ENCODE measurements at regions of chr17 and their contacts with region 1.

Region 1: GRCh38 chr17:63773381-63774140 is at the start of gene CCDC47:
- DNase-seq: peak; percentile 99
- H3K4me3 Mint-ChIP-seq: peak within 1 kb of the TSS; percentile 96
- H3K27ac Mint-ChIP-seq: peak within 1 kb of the TSS; percentile 99
- H3K4me1 Mint-ChIP-seq: peaks cover 54% of the 10 kb centered on the region
- H3K27me3 Mint-ChIP-seq: no peaks in the 10 kb centered on the region
- total RNA-seq, gene CCDC47: 56.7 to 57.9 TPM

Region 2: GRCh38 chr17:63707151-63707550 is 66.4 kb before region 1 on chr17:
- CTCF ChIA-PET with region 1: interaction called, 5 read pairs
- POLR2A ChIA-PET with region 1: interaction called, 178 read pairs
- DNase-seq: no peak
- H3K4me3 Mint-ChIP-seq: peak overlapping the region; percentile 13
- H3K27ac Mint-ChIP-seq: peak overlapping the region; percentile 69
- H3K4me1 Mint-ChIP-seq: peaks cover 73% of the 10 kb centered on the region
- H3K27me3 Mint-ChIP-seq: no peaks in the 10 kb centered on the region

Region 3: GRCh38 chr17:63751806-63752205 is 21.8 kb before region 1 on chr17:
- CTCF ChIA-PET with region 1: interaction called, 6 read pairs
- POLR2A ChIA-PET with region 1: interaction called, 36 read pairs
- DNase-seq: peak; percentile 33
- H3K4me3 Mint-ChIP-seq: peak overlapping the region; percentile 33
- H3K27ac Mint-ChIP-seq: peak overlapping the region; percentile 75
- H3K4me1 Mint-ChIP-seq: peaks cover 19% of the 10 kb centered on the region
- H3K27me3 Mint-ChIP-seq: no peaks in the 10 kb centered on the region

Region 4: DNA sequence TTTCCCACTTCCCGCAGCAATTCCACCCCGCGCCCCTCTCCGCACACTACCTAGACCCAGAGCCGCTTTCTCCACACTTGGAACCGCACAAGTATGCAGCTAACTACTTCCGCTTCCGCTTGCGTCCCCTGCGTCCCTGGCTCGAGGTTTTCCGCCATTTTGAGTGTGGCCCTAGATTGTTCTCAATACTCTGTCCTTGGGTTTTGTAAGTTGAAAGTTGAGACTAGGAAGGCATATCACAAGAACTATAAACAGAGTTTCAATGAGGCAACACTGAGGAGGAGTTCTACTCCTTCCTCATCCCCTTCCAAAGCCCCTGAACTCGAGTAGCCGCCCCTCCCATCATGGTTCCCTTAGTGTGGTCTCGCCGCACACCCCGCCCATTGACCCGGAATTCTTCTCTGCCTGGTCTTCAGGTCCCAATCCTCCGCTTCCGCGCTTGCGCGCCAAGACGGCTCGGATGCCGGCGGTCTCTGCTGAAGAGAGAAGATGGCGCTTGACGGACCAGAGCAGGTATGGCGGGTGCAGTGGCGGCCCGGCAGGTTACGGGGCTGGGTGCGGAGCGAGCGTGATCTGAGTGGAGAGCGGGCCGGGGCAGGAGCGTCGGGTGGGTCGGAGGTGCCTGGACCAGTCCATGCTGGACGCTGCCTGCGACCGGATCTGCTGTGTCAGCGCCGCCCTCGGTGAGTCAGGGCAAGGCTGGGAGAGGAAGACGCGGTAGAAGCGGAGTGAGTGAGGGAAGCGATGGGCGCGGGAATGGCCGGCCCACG is 53.6 kb after region 1 on chr17 and contains the starts of genes FTSJ3 and PSMC5:
- CTCF ChIA-PET with region 1: interaction called, 13 read pairs
- POLR2A ChIA-PET with region 1: interaction called, 41 read pairs
- DNase-seq: peak; percentile 96
- H3K4me3 Mint-ChIP-seq: peak within 1 kb of the TSS; percentile 89
- H3K27ac Mint-ChIP-seq: peak within 1 kb of the TSS; percentile 93
- H3K4me1 Mint-ChIP-seq: peaks cover 82% of the 10 kb centered on the region
- H3K27me3 Mint-ChIP-seq: no peaks in the 10 kb centered on the region
- total RNA-seq, gene FTSJ3: 38.9 to 43.8 TPM
- total RNA-seq, gene PSMC5: 152 to 162 TPM

Region 5: DNA sequence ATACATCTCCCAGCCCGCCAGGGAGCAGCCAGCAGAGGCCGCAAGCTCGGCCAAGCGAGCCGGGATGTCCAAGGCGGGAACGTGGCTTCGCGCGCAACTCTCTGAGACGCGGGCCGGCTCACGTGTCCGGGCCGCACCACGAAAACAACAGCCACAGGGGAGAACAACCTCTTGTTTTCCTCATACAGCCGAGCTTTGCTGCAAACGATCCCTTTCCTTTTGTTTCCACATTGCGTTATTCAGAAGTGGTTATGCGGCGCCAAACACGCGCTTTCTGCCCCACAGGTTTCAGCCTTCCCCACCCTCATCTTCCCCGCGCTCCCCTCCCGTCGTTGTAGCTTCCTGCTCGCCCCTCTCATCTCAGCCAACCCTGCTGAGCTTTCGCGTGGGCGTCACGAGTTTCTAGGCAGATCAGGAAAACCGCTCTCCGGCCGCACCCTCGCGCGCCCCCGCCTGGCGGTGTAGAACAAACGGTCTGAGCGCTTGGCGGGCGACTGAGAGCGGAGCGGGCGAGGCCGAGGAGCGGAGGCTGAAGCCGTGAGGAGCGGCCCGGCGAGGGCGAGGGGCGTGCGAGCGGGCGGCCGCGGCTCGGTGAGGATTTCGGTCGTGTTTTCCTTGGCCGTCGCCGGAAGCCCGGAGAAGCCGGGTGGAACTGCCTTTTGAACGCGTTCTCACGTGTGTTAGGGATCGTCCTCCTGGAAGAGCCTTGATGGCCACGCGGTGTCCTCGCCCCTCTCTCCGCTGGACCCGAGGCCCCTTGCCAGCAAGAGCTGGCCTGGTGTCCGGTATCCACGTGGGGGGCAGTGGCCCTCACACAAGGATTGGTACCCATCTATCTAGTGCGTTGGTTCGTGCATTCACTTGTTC is 75.5 kb after region 1 on chr17:
- CTCF ChIA-PET with region 1: interaction called, 11 read pairs
- POLR2A ChIA-PET with region 1: interaction called, 20 read pairs
- DNase-seq: peak; percentile 96
- H3K4me3 Mint-ChIP-seq: peak overlapping the region; percentile 61
- H3K27ac Mint-ChIP-seq: peak overlapping the region; percentile 86
- H3K4me1 Mint-ChIP-seq: peaks cover 27% of the 10 kb centered on the region
- H3K27me3 Mint-ChIP-seq: peaks cover 15% of the 10 kb centered on the region

Region 6: DNA sequence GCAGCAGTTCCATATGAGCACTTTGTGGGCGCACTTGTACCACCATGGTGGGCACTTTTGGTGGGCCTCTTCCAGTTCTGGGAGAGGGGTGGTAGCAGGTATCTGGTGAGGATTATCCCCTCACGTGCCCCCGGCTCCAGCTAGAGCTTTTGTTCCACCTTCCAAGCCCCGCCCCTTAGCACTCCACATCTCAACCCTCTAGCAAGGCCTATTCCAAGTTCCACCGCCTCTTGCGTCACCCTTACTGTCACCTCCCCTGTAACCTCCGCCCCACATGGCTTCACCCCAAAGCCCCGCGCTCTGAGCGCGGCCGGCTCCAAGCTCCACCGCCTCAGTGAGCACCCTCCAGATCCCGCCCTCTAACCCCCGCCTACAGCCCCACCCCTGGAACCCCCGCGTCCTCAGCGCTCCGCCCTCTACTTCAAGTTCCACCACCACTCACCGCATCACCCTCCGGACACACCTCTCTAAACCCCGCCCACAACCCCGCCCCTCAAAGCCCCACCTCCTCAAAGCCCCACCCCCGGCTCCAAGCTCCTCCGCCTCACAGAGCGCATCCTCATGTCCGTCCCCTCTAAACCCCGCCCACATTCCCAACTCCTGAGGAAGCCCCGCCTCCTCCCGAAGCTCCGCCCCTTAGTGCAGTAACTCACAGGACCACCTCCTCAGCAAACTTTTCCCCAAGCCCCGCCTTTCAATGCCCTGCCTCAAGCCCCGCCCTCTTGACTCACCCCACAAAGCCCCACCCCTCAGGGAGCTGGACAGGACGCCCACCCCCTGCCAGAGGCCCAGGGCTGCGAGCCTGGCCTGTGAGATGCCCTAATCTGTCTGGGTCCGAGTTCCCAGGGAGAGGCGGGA is 188.0 kb after region 1 on chr17:
- CTCF ChIA-PET with region 1: no interaction called
- POLR2A ChIA-PET with region 1: no interaction called
- DNase-seq: peak; percentile 52
- H3K4me3 Mint-ChIP-seq: no peak overlapping the region
- H3K27ac Mint-ChIP-seq: no peak overlapping the region
- H3K4me1 Mint-ChIP-seq: peaks cover 6% of the 10 kb centered on the region
- H3K27me3 Mint-ChIP-seq: peaks cover 5% of the 10 kb centered on the region

Region 7: GRCh38 chr17:64158831-64159590 is 385.4 kb after region 1 on chr17:
- CTCF ChIA-PET with region 1: no interaction called
- POLR2A ChIA-PET with region 1: no interaction called
- DNase-seq: no peak
- H3K4me3 Mint-ChIP-seq: no peak overlapping the region
- H3K27ac Mint-ChIP-seq: no peak overlapping the region
- H3K4me1 Mint-ChIP-seq: peaks cover 2% of the 10 kb centered on the region
- H3K27me3 Mint-ChIP-seq: no peaks in the 10 kb centered on the region